Mammary epithelial cell (primary cell): ENCODE measurements at regions of chr1 and their contacts with region 1.

Region 1: DNA sequence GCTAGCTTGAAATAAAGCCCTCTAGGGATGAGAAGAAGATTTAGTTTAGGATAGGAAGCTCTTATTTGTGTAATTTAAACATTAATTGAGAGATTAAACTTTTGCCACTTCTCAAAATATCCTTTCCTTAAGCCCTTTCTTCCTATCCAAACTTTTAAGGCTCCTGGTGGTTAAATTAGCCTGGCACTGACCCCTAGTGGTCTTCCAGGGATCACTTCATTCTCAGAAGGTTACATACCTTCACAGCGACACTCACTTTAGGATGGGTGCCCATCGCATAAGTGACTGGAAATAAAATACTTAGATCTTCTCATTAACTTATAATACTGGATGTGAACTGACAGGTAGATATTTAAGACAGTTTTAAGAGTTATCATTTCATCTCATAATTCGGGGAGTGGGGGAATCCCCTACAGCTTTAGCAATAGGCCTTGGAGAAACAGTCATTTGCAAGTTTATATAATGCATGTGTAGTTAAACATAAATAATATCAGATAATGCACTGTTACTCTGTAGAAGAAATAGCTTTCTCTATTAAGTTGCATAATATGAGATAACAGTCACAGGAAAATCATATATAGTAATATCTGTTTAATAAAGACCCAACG is 7.4 kb downstream of the LHX9 start:
- DNase-seq: no peak
- H3K4me3 ChIP-seq: no peak overlapping the region
- H3K27ac ChIP-seq: no peak overlapping the region
- H3K4me1 ChIP-seq: peaks cover 3% of the 10 kb centered on the region
- H3K27me3 ChIP-seq: peaks cover 22% of the 10 kb centered on the region
- CTCF ChIP-seq: peak; percentile 60 to 81

Region 2: GRCh38 chr1:197399755-197400527 is 524.7 kb before region 1 on chr1:
- CTCF ChIA-PET with region 1: interaction called, 4 read pairs
- dilution Hi-C with region 1: no loop called
- in situ Hi-C with region 1: no loop called
- intact Hi-C with region 1: loop called (anchors 5 kb)
- DNase-seq: peak; percentile 42
- H3K4me3 ChIP-seq: no peak overlapping the region
- H3K27ac ChIP-seq: no peak overlapping the region
- H3K4me1 ChIP-seq: no peaks in the 10 kb centered on the region
- H3K27me3 ChIP-seq: peaks cover 3% of the 10 kb centered on the region
- CTCF ChIP-seq: peak; percentile 69 to 79

Region 3: GRCh38 chr1:197521118-197521739 is 403.4 kb before region 1 on chr1:
- CTCF ChIA-PET with region 1: no interaction called
- dilution Hi-C with region 1: no loop called
- in situ Hi-C with region 1: loop called (anchors 10 kb)
- intact Hi-C with region 1: loop called (anchors 5 kb)
- DNase-seq: peak; percentile 17
- H3K4me3 ChIP-seq: no peak overlapping the region
- H3K27ac ChIP-seq: no peak overlapping the region
- H3K4me1 ChIP-seq: no peaks in the 10 kb centered on the region
- H3K27me3 ChIP-seq: no peaks in the 10 kb centered on the region
- CTCF ChIP-seq: peak; percentile 67 to 69

Region 4: GRCh38 chr1:197614916-197615692 is 309.5 kb before region 1 on chr1:
- CTCF ChIA-PET with region 1: no interaction called
- dilution Hi-C with region 1: no loop called
- in situ Hi-C with region 1: no loop called
- intact Hi-C with region 1: loop called (anchors 2 kb)
- DNase-seq: peak; percentile 19
- H3K4me3 ChIP-seq: no peak overlapping the region
- H3K27ac ChIP-seq: no peak overlapping the region
- H3K4me1 ChIP-seq: no peaks in the 10 kb centered on the region
- H3K27me3 ChIP-seq: no peaks in the 10 kb centered on the region
- CTCF ChIP-seq: peak; percentile 50 to 70

Region 5: GRCh38 chr1:197692965-197693364 is 231.7 kb before region 1 on chr1:
- CTCF ChIA-PET with region 1: no interaction called
- dilution Hi-C with region 1: no loop called
- in situ Hi-C with region 1: no loop called
- intact Hi-C with region 1: loop called (anchors 1 kb)
- DNase-seq: peak; percentile 11
- H3K4me3 ChIP-seq: no peak overlapping the region
- H3K27ac ChIP-seq: no peak overlapping the region
- H3K4me1 ChIP-seq: peaks cover 5% of the 10 kb centered on the region
- H3K27me3 ChIP-seq: no peaks in the 10 kb centered on the region
- CTCF ChIP-seq: peak; percentile 29 to 55

Region 6: GRCh38 chr1:197958438-197959300 is 34.0 kb after region 1 on chr1:
- CTCF ChIA-PET with region 1: no interaction called
- dilution Hi-C with region 1: no loop called
- in situ Hi-C with region 1: no loop called
- intact Hi-C with region 1: no loop called
- DNase-seq: no peak
- H3K4me3 ChIP-seq: no peak overlapping the region
- H3K27ac ChIP-seq: no peak overlapping the region
- H3K4me1 ChIP-seq: no peaks in the 10 kb centered on the region
- H3K27me3 ChIP-seq: no peaks in the 10 kb centered on the region
- CTCF ChIP-seq: no peak